HEK293 (cell line): ENCODE measurements at regions of chr7 and their contacts with region 1.

Region 1: DNA sequence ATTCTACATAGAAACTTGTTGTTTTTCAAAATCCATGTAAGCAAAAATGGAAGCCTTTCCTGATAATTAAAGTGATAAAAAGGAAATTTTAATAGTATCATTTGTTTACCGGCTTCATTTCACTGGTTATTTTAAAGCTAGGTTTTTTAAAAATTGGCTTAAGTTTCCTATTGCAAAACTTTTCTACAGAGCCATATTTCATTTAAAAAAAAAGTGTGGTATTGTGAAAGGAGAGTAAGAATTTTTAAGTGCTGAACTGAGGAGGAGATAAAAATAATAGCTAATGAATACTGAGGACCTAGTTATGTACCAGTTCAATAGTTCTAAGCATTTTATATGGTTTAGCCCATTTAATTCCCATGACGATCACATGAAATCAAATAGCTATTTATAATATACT is 172.2 kb upstream of the COL1A2 start:
- H3K4me3 ChIP-seq: no peak overlapping the region
- H3K27ac ChIP-seq: no peak overlapping the region
- H3K4me1 ChIP-seq: no peaks in the 10 kb centered on the region
- CTCF ChIP-seq: no peak

Region 2: GRCh38 chr7:93810561-93810960 is 412.0 kb before region 1 on chr7:
- CTCF ChIA-PET with region 1: interaction called, 11 read pairs
- POLR2A ChIA-PET with region 1: no interaction called
- H3K4me3 ChIP-seq: no peak overlapping the region
- H3K27ac ChIP-seq: no peak overlapping the region
- H3K4me1 ChIP-seq: no peaks in the 10 kb centered on the region
- CTCF ChIP-seq: no peak